ENCODE measurements at regions of chr5 and their contacts with region 1.

Region 1: GRCh38 chr5:88680253-88681132 is 202.5 kb downstream of the MEF2C start:
- DNase-seq: peak; percentile 68 to 79 (median 75)
- H3K4me3 ChIP-seq: peak overlapping the region in 3 of 7 experiments; percentile 19 to 58 (median 46)
- H3K27ac ChIP-seq: no peak overlapping the region
- H3K4me1 ChIP-seq: peaks cover under 1 to 20% (median 16%) of the 10 kb centered on the region in 4 experiments
- H3K27me3 ChIP-seq: peaks cover 37 to 99% (median 69%) of the 10 kb centered on the region in 5 experiments

Region 2: DNA sequence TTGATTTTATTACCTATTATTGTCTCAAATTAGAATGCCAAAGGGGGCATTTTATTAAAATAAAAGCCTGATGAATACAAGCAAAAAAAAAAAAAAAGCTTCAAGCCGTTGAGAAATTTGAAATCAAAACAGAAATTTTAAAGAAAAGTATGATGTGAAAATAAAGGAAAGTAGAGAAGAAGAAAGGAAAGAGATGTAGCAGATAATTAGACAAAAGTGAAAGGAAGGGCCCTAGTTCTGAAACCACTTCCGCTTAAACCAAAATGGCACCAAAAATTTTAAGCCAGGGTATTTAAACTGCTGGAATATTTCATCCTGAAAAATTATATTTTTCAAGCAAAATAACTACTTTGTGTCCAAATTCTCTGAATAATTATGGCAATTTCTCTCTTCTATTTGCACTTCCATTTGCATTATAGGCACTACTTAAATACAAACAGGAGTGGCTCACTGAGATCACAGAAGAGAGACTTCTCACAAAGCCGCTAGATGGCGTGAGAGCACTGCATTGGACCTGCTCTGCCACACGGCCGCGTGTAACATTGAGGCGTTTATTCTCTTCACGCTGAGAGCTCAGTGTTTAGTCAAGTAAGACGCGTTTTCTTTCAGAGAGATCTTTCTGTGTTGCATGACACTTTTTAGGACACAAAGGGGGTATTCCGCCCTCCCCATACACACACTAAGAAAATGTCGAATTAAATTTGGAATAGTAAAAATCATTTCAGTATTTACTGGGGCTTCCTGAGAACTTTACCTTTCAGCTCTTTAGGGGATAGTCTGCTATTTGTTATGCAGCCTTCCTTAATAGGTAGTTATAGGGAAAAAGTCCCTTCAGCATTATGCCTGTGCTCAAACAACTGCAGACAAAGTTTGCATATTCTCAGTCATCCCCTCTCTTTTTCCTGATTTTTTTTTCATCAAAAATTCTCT is 899.4 kb before region 1 on chr5:
- CTCF ChIA-PET with region 1: interaction called, 26 read pairs
- POLR2A ChIA-PET with region 1: no interaction called
- DNase-seq: peak; percentile 82 to 93 (median 92)
- H3K4me3 ChIP-seq: no peak overlapping the region
- H3K27ac ChIP-seq: no peak overlapping the region
- H3K4me1 ChIP-seq: no peaks in the 10 kb centered on the region
- H3K27me3 ChIP-seq: peaks cover 5 to 49% (median 16%) of the 10 kb centered on the region in 5 experiments

Region 3: DNA sequence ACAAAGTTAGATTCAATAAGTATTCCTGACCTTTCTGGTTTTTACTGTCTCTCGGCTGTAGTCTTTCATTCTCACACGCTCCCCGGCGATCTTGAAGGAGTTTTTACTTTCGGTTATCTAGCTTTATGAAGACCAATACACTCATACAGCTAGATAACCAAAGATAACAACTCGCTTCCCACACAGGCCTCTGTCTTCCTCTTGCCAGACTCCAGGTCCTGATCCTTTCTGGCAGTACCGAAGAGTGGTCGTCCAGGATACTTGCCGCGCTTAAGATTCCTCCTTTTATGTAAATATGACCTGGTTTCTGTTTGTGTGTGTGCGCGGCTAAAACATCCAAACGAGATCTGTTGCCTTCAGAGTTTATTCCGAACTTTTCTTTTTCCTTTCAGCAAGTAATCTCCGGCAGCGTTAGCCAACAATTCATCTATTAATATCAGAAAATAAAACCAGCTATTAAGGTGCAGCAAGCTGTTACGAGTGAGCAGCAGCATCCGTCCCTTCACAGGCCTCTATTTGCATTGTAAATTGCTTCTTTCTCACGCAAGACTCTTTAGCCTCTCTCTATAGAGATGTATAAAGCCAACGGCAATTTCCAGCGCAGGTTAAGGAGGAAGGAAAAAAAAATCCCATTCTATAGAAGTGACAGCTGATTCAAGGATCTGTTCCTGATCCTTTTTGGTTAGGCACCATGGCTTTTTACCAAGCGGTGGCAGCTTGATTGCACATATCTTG is 13.6 kb before region 1 on chr5:
- CTCF ChIA-PET with region 1: interaction called, 21 read pairs
- POLR2A ChIA-PET with region 1: interaction called, 3 read pairs
- DNase-seq: peak in 2 of 3 donors; percentile 61 to 62
- H3K4me3 ChIP-seq: peak overlapping the region in 6 of 7 experiments; percentile 35 to 78 (median 51)
- H3K27ac ChIP-seq: no peak overlapping the region
- H3K4me1 ChIP-seq: peaks cover 0 to 7% (median 4%) of the 10 kb centered on the region in 4 experiments
- H3K27me3 ChIP-seq: peaks cover 38 to 99% (median 82%) of the 10 kb centered on the region in 5 experiments

Region 4: DNA sequence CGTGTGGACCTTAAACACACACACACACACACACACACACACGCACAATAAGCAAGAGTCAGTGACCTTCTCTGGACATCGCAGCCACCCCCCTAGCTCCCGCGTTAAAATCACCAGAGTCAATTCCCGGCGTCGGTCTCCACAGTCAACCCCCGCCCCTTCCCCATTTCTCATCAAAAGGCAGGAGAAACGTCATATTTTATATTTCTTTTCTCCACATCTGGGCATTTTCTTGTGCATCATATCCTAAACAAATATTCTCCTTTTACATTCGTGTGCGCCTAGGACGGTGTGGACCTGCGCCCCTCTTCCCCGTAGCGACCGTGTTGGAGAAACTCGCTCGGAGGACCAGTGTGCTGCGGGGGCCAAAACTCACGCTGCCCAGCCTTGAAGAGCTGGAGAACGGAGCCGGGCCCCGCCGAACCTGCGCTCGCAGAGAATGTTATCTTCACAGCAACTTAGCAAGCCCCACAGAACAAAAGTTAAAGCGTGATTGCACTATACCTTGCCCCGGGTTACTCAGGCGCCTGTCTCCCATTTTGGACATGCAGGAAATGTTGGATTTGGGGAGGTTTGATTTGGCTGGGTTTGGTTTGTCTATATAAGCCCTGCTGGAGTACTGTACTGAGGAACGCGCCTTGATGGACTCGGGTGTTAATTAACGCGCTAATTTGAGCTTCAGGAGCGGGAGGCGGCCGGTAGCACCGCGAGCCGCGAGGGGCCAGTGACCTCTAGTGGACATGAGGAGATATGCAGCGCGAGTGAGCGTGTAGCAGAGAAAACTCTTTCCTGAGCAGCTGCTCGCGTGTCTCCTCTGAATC is 10.1 kb after region 1 on chr5:
- CTCF ChIA-PET with region 1: interaction called, 17 read pairs
- POLR2A ChIA-PET with region 1: no interaction called
- DNase-seq: peak; percentile 78 to 85 (median 84)
- H3K4me3 ChIP-seq: peak overlapping the region in 4 of 7 experiments; percentile 26 to 54 (median 34)
- H3K27ac ChIP-seq: no peak overlapping the region
- H3K4me1 ChIP-seq: peaks cover 0 to 19% (median 15%) of the 10 kb centered on the region in 4 experiments
- H3K27me3 ChIP-seq: peaks cover 42 to 100% (median 85%) of the 10 kb centered on the region in 5 experiments